Heart right ventricle (tissue), 16 donors: ENCODE measurements at regions of chr1 and their contacts with region 1.

Region 1: DNA sequence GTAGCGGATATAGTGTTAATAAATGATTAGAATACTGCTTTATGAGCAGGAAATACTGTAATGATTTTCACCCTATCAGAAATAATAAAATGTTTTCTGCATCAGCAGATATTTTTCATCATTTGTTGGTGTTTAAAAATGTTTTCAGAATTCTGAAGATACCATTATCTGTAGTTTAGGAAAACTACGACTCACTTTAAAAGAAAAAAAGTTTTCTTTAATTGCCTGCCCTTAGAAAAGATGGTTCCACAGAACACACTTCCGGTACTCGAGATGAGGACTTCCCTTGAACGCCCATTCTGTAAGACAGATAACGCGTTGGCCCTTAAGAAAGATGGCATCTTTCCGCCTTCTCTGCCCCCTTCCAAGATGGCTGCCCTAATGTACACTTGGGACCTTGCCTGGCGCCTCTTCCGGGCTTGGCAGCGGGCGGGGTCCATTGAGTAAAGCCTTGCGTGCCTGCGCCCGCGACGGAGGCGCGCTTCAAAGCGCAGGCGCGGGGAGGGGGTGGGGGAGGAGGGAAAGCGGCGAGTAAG is at the start of gene SZRD1:
- DNase-seq: peak; percentile 95 to 97
- ATAC-seq: peak; percentile 91 to 97 (median 94)
- H3K4me3 ChIP-seq: peak within 1 kb of the TSS; percentile 50 to 96 (median 75)
- H3K27ac ChIP-seq: peak within 1 kb of the TSS; percentile 91 to 99 (median 98)
- H3K4me1 ChIP-seq: peaks cover 12 to 69% (median 33%) of the 10 kb centered on the region in 9 donors
- H3K27me3 ChIP-seq: no peaks in the 10 kb centered on the region
- CTCF ChIP-seq: no peak
- total RNA-seq, gene SZRD1: 87.1 to 131 (median 102) TPM

Region 2: GRCh38 chr1:16073490-16074119 is 293.2 kb before region 1 on chr1 and contains the start of gene FAM131C:
- intact Hi-C with region 1: loop called in 8 of 10 experiments (anchors 5 to 10 kb)
- DNase-seq: no peak
- ATAC-seq: peak in 2 of 8 donors; percentile 19 to 42
- H3K4me3 ChIP-seq: peak within 1 kb of the TSS; percentile 18 to 48 (median 40)
- H3K27ac ChIP-seq: no peak within 1 kb of the TSS
- H3K4me1 ChIP-seq: peaks cover 7 to 50% (median 31%) of the 10 kb centered on the region in 9 donors
- H3K27me3 ChIP-seq: peaks cover 0 to 35% (median 6%) of the 10 kb centered on the region in 7 donors
- CTCF ChIP-seq: peak in 8 of 9 donors; percentile 11 to 72 (median 34)
- total RNA-seq, gene FAM131C: 0.72 to 11.8 (median 2.4) TPM

Region 3: DNA sequence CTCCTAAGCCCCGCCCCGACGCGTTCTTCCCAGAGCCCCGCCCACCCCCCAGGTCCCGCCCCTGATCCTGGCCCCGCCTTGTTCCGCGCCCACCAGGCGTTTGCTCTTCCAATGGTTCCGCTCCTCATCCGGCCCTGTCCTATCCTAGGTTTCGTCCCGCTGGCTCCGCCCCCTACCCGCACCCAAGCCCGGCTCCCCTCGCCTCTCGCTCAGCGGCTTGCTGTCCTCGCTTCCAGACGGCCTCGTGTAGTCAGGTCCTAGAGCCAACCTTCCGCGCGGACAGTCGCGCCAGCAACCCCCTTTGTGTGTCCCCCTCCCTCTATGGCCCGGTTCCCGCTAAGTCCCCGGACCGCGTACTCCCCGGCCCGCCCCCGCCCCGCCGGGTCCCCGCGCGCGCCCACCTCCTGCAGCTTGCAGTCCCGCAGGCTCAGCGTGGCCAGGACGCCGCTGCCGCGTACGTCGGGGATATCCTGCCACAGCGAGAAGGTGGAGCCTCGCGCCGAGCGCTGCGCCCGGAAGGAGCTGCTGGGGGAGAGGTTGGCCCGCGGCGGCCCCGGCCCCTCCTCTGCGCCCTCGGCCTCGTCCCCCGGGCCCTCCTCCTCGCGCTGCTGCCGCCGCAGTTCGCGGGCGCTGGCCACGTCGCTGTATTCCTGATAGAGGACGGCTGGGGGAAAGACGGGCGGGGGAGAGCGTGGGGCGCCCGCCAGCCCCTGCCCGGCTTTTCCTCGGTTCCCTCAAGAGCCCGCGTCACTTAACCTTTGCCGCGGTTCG is 160.1 kb before region 1 on chr1:
- intact Hi-C with region 1: loop called in 6 of 10 experiments (anchors 2 to 10 kb)
- DNase-seq: peak; percentile 97
- ATAC-seq: peak; percentile 93 to 97 (median 96)
- H3K4me3 ChIP-seq: peak overlapping the region; percentile 9 to 64 (median 58)
- H3K27ac ChIP-seq: peak overlapping the region; percentile 73 to 96 (median 90)
- H3K4me1 ChIP-seq: peaks cover 0 to 25% (median 17%) of the 10 kb centered on the region in 9 donors
- H3K27me3 ChIP-seq: no peaks in the 10 kb centered on the region
- CTCF ChIP-seq: no peak

Region 4: DNA sequence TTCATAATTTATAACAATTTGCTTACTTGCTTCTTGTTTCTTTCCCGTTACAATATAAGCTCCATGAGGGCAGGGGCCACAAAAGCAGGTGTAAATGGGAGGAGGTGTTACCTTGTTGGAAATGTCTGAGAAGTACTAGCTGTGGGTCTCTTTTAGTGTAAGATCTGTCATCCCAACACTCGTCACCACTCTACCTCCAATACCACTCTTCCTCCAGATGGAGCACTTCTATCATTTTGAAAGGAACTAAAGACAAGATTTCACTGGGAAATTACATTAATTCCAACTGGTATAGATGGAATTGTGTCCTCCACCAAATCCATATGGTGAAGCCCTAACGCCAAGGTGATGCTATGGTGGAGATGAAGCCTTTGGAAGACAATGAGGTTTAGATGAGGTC is 76.8 kb before region 1 on chr1:
- intact Hi-C with region 1: no loop called
- DNase-seq: no peak
- ATAC-seq: no peak
- H3K4me3 ChIP-seq: no peak overlapping the region
- H3K27ac ChIP-seq: no peak overlapping the region
- H3K4me1 ChIP-seq: peaks cover 6 to 40% (median 19%) of the 10 kb centered on the region in 9 donors
- H3K27me3 ChIP-seq: no peaks in the 10 kb centered on the region
- CTCF ChIP-seq: no peak

Region 5: GRCh38 chr1:16324456-16324890 is 42.3 kb before region 1 on chr1:
- intact Hi-C with region 1: no loop called
- DNase-seq: peak in 1 of 2 donors; percentile 9
- ATAC-seq: peak in 6 of 8 donors; percentile 57 to 82 (median 72)
- H3K4me3 ChIP-seq: no peak overlapping the region
- H3K27ac ChIP-seq: peak overlapping the region in 2 of 10 donors; percentile 33 to 45
- H3K4me1 ChIP-seq: peaks cover 0 to 46% (median 24%) of the 10 kb centered on the region in 9 donors
- H3K27me3 ChIP-seq: no peaks in the 10 kb centered on the region
- CTCF ChIP-seq: no peak

Region 6: GRCh38 chr1:16440470-16441281 is 73.9 kb after region 1 on chr1 and contains the start of gene NECAP2:
- intact Hi-C with region 1: loop called in 3 of 10 experiments (anchors 5 kb)
- DNase-seq: peak; percentile 96
- ATAC-seq: peak; percentile 95 to 98 (median 96)
- H3K4me3 ChIP-seq: peak within 1 kb of the TSS; percentile 64 to 100 (median 93)
- H3K27ac ChIP-seq: peak within 1 kb of the TSS; percentile 73 to 98 (median 84)
- H3K4me1 ChIP-seq: peaks cover 19 to 61% (median 33%) of the 10 kb centered on the region in 9 donors
- H3K27me3 ChIP-seq: no peaks in the 10 kb centered on the region
- CTCF ChIP-seq: peak; percentile 85 to 98 (median 90)
- total RNA-seq, gene NECAP2: 7.9 to 34.0 (median 11.7) TPM